Activated CD4-positive, alpha-beta memory T cell treated with anti-CD3 and anti-CD28 coated beads for 36 hours (primary cell): ENCODE measurements at regions of chr2 and their contacts with region 1.

Region 1: DNA sequence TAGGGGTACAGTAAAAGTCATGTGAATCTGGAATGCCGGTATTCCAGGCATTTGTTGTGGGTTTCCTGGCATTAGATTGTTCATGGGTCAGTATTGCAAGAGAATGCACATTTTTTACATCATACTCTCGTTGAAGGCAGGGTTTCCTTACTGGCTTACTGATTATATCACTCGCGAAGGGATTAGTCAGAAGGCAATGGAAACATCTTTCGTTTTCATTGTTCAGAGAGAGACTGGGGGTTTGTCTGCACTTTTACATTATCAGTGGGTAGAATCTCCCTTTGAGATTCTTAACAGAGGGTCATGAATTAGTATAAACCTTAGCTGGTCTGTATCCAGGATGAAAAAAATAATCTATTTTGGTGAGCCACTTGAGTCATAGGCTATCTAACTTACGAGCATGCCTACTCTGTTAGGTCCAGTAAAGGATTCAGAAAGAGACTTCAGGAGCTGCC is 229.3 kb upstream of the EPAS1 start:
- DNase-seq: no peak
- H3K4me3 Mint-ChIP-seq: no peak overlapping the region
- H3K27ac Mint-ChIP-seq: peak overlapping the region; percentile 45
- H3K4me1 Mint-ChIP-seq: peaks cover 32% of the 10 kb centered on the region
- H3K27me3 Mint-ChIP-seq: no peaks in the 10 kb centered on the region

Region 2: DNA sequence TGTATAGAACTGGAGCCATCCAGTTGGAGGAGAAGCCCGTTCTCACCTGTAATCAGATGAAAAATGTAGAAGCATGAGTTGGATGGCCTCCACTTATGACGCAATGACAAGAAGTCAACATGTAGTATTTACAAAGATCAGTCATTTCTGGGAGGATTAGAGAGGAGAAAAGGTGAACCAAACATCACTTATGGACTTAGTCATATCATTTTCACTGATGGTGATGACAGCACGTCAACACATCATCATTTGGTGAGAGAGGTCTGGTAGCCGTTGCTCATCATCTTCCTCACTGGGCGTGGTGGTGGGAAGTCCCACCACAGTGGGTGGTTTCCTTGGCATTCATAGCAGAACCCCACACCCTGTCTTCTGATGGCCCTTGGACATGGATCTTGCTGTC is 34.9 kb before region 1 on chr2:
- CTCF ChIA-PET with region 1: interaction called, 4 read pairs
- POLR2A ChIA-PET with region 1: no interaction called
- intact Hi-C with region 1: loop called (anchors 1 kb)
- DNase-seq: peak; percentile 88
- H3K4me3 Mint-ChIP-seq: no peak overlapping the region
- H3K27ac Mint-ChIP-seq: peak overlapping the region; percentile 76
- H3K4me1 Mint-ChIP-seq: peaks cover 28% of the 10 kb centered on the region
- H3K27me3 Mint-ChIP-seq: no peaks in the 10 kb centered on the region

Region 3: DNA sequence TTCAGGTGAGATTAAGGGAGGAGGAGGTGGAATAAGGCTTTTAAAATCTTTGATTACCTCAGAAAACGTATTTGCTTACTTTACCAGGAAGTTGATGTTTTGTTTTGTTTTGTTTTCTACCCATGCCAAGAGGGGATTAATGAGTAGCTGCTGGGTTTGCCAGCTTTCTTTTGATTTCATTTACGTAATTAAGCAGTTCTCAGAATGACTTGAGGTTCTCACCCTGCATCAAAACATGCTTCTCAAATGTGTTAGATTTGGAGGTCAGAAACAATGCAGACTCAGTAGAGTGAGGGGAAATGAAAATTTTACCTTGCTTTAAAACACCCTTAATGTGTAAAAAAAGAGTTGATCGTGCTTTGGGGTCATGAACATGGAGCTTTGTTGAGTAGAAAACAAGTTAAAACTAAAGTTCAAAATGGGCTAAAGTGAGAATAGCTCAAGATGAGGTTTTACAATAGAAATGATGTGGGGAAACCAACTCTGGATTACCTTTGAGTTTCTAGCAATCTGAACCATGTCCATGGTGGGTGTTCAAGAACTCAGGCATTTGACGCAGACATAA is 12.2 kb after region 1 on chr2:
- CTCF ChIA-PET with region 1: interaction called, 8 read pairs
- POLR2A ChIA-PET with region 1: interaction called, 11 read pairs
- intact Hi-C with region 1: loop called (anchors 1 kb)
- DNase-seq: no peak
- H3K4me3 Mint-ChIP-seq: no peak overlapping the region
- H3K27ac Mint-ChIP-seq: peak overlapping the region; percentile 86
- H3K4me1 Mint-ChIP-seq: peaks cover 36% of the 10 kb centered on the region
- H3K27me3 Mint-ChIP-seq: no peaks in the 10 kb centered on the region

Region 4: GRCh38 chr2:46097714-46098480 is 30.0 kb after region 1 on chr2:
- CTCF ChIA-PET with region 1: interaction called, 10 read pairs
- POLR2A ChIA-PET with region 1: no interaction called
- intact Hi-C with region 1: loop called (anchors 2 kb)
- DNase-seq: no peak
- H3K4me3 Mint-ChIP-seq: no peak overlapping the region
- H3K27ac Mint-ChIP-seq: no peak overlapping the region
- H3K4me1 Mint-ChIP-seq: peaks cover 18% of the 10 kb centered on the region
- H3K27me3 Mint-ChIP-seq: no peaks in the 10 kb centered on the region

Region 5: GRCh38 chr2:46179037-46179652 is 111.3 kb after region 1 on chr2:
- CTCF ChIA-PET with region 1: no interaction called
- POLR2A ChIA-PET with region 1: no interaction called
- intact Hi-C with region 1: loop called (anchors 2 kb)
- DNase-seq: peak; percentile 73
- H3K4me3 Mint-ChIP-seq: no peak overlapping the region
- H3K27ac Mint-ChIP-seq: peak overlapping the region; percentile 31
- H3K4me1 Mint-ChIP-seq: peaks cover 10% of the 10 kb centered on the region
- H3K27me3 Mint-ChIP-seq: no peaks in the 10 kb centered on the region

Region 6: DNA sequence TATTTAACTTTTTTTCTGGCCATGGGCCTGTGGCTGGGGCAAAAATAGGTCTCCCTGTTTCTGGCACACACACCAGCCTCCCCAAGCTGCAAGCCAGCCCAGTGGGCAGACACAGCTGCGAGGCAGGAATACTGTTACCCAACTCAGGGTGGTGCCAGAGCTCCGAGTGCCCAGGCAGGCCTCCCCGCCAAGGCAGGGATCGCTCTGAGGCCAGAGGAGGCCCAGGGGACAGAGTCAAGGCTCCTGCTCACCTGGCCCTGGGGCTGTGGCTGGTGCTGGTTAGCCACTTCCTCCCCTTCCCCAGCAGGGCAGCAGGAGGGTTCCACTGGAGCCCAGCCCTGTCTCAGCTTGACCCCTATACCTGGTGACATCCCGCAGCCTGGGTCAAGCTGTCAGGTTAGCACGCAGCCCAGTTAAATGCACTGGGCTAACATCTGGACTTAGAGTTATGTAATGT is 162.3 kb after region 1 on chr2:
- CTCF ChIA-PET with region 1: interaction called, 7 read pairs
- POLR2A ChIA-PET with region 1: interaction called, 3 read pairs
- intact Hi-C with region 1: loop called (anchors 1 kb)
- DNase-seq: peak; percentile 50
- H3K4me3 Mint-ChIP-seq: peak overlapping the region; percentile 16
- H3K27ac Mint-ChIP-seq: peak overlapping the region; percentile 92
- H3K4me1 Mint-ChIP-seq: peaks cover 51% of the 10 kb centered on the region
- H3K27me3 Mint-ChIP-seq: no peaks in the 10 kb centered on the region